ENCODE measurements at regions of chr20 and their contacts with region 1.

Region 1: GRCh38 chr20:63739130-63740069 is at the start of gene SLC2A4RG:
- DNase-seq: peak in 1 of 2 donors; percentile 86
- H3K4me3 ChIP-seq: peak within 1 kb of the TSS; percentile 85 to 93
- H3K27ac ChIP-seq: peak within 1 kb of the TSS; percentile 87 to 96
- H3K4me1 ChIP-seq: peaks cover 17 to 21% of the 10 kb centered on the region in 2 donors
- H3K27me3 ChIP-seq: no peaks in the 10 kb centered on the region
- CTCF ChIP-seq: no peak
- total RNA-seq, gene SLC2A4RG: 114 TPM

Region 2: GRCh38 chr20:63657937-63658748 is 81.3 kb before region 1 on chr20 and contains the start of gene RTEL1:
- intact Hi-C with region 1: loop called (anchors 5 kb)
- DNase-seq: peak; percentile 59 to 96
- H3K4me3 ChIP-seq: peak within 1 kb of the TSS; percentile 67 to 83
- H3K27ac ChIP-seq: peak within 1 kb of the TSS; percentile 78 to 88
- H3K4me1 ChIP-seq: peaks cover 7 to 18% of the 10 kb centered on the region in 2 donors
- H3K27me3 ChIP-seq: no peaks in the 10 kb centered on the region
- CTCF ChIP-seq: no peak
- total RNA-seq, gene RTEL1: 80.6 TPM

Region 3: GRCh38 chr20:63707549-63708300 is 31.7 kb before region 1 on chr20 and contains the starts of genes ARFRP1 and ZGPAT:
- intact Hi-C with region 1: loop called (anchors 2 kb)
- DNase-seq: peak in 1 of 2 donors; percentile 94
- H3K4me3 ChIP-seq: peak within 1 kb of the TSS; percentile 80 to 88
- H3K27ac ChIP-seq: peak within 1 kb of the TSS; percentile 86 to 94
- H3K4me1 ChIP-seq: peaks cover 6 to 14% of the 10 kb centered on the region in 2 donors
- H3K27me3 ChIP-seq: no peaks in the 10 kb centered on the region
- CTCF ChIP-seq: no peak
- total RNA-seq, gene ARFRP1: 50.8 TPM
- total RNA-seq, gene ZGPAT: 42.4 TPM

Region 4: DNA sequence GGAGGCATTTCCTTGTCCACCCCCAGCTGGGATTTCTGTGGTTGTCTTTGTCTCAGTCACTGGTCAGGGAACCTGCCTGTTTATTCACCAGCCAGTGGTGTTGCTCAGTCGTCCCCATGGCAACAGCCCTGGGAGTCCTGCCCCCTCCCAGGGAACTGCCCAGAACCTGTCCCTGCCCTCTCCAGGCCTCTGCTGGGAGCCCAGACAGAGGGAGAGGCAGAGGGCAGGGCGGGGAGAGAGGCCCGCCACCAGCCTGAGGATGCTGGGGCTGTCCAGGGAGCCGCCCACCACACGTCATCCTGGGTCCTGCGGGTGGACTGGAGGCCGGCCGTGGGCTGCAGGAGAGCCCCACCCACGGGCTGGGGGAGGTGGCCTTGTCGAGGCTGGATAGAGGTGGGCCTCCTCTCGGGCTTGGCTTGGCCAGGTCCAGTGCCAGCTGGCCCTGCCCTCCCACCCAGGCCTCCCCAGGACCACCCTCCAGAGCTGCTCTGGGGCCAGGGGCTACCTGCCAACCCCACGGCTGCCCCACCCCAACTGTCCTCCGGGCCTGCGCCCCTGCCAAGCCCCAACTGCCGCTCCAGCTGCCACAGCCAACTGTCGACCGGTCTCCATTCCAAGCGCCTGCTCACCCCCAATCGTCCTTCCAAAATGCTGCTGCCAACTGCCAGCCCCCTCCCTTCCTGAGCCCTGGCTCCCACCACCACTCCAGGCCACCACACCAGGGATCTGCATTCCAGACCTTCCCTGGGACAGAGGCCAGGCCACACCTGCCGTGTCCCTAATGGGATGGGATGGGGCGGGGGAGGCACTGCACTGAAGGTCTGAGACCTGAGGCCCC is 95.8 kb after region 1 on chr20:
- intact Hi-C with region 1: loop called (anchors 5 kb)
- DNase-seq: peak; percentile 88 to 95
- H3K4me3 ChIP-seq: peak overlapping the region in 1 of 2 donors; percentile 16
- H3K27ac ChIP-seq: peak overlapping the region; percentile 60 to 73
- H3K4me1 ChIP-seq: peaks cover 14 to 20% of the 10 kb centered on the region in 2 donors
- H3K27me3 ChIP-seq: no peaks in the 10 kb centered on the region
- CTCF ChIP-seq: no peak

Region 5: DNA sequence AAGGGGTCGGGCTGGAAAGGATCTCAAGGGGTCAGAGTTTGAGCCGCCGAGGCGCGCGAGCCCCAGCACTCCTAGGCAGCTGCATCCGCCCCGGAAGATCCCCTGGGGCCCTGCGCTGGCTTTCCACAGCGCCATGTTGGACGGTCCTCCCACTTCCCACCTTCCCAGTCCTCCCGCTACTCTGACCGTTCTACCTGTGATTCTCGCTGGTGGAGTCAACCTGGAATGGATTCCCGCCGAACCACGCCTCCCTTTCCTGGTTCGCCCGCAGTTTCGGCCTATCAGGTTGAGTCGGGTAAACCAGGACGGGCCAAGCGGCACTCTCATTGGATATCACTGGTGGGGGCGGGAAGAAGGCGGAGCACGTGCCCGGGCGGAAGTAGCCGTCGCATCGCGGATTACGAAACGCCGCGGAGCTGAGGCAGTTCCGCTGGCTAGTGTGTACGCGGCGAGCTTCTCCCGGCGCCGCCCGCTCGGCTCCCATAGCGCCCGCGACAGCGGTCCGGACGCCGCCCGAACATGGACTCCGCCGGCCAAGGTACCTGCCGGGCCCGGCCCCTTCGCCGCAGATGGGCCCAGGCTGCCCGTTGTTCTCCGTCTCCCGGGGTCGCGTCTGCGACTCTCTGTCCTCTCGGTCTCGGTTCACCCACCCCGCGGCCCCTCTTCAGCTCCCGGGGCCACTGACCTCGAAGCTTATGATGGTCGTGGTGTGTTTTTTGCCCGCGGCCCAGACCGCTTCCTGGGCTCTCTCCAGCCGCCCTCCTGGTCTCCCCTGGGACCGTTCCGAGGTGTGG is 125.6 kb after region 1 on chr20 and contains the start of gene TPD52L2:
- intact Hi-C with region 1: loop called (anchors 1 kb)
- DNase-seq: peak; percentile 95 to 99
- H3K4me3 ChIP-seq: peak within 1 kb of the TSS; percentile 77 to 92
- H3K27ac ChIP-seq: peak within 1 kb of the TSS; percentile 92 to 98
- H3K4me1 ChIP-seq: peaks cover 0 to 22% of the 10 kb centered on the region in 2 donors
- H3K27me3 ChIP-seq: no peaks in the 10 kb centered on the region
- CTCF ChIP-seq: peak in 1 of 3 experiments; percentile 5
- total RNA-seq, gene TPD52L2: 161 TPM

Region 6: DNA sequence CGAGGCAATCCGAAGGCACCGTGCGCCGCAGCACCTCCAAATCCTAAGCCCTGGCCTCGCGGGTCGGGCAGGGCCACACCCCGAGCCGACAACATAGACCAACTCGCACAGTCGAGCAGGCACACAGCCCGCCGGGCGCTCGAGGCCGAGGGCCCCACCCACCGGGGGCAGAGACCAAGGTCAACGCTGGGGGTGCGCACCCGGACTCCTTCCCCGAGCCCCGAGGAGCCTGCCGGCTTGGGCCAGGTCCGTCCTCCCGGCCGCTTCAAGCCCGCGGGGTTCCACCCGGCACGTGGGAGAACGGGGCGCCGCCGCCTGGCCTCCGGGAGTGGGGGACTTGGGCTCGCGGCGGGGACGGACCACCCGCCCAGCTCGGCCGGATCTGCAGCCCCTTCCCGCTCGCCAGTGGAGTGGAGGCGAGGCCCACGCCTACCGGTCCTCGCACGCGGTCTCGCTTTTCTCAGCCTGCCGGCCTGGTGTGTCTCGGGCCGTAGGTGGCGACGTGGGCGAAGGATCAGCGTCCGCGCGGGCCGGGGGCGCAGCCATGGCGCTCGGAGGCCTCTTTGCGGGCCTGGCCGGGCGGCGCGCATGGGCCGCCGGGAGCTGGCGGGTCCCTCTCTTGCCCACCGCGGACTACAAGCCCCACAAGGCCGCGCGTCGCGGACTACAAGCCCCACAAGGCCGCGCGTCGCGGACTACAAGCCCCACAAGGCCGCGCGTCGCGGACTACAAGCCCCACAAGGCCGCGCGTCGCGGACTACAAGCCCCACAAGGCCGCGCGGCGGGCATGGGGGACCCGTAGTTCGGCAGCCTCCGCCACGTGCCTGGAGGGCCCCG is 216.6 kb after region 1 on chr20 and contains the start of gene UCKL1:
- intact Hi-C with region 1: loop called (anchors 1 kb)
- DNase-seq: peak; percentile 73 to 96
- H3K4me3 ChIP-seq: peak within 1 kb of the TSS; percentile 75 to 93
- H3K27ac ChIP-seq: peak within 1 kb of the TSS; percentile 82 to 87
- H3K4me1 ChIP-seq: peaks cover 7 to 35% of the 10 kb centered on the region in 2 donors
- H3K27me3 ChIP-seq: no peaks in the 10 kb centered on the region
- CTCF ChIP-seq: no peak
- total RNA-seq, gene UCKL1: 95.4 TPM